ENCODE measurements at regions of chr9 and their contacts with region 1.

Region 1: GRCh38 chr9:99855467-99856181 is 33.9 kb downstream of the NR4A3 start:
- DNase-seq: no peak
- ATAC-seq: no peak
- H3K4me3 Mint-ChIP-seq: no peak overlapping the region
- H3K27ac Mint-ChIP-seq: no peak overlapping the region
- H3K4me1 Mint-ChIP-seq: peaks cover 26% of the 10 kb centered on the region
- H3K27me3 Mint-ChIP-seq: no peaks in the 10 kb centered on the region
- CTCF ChIP-seq: no peak

Region 2: DNA sequence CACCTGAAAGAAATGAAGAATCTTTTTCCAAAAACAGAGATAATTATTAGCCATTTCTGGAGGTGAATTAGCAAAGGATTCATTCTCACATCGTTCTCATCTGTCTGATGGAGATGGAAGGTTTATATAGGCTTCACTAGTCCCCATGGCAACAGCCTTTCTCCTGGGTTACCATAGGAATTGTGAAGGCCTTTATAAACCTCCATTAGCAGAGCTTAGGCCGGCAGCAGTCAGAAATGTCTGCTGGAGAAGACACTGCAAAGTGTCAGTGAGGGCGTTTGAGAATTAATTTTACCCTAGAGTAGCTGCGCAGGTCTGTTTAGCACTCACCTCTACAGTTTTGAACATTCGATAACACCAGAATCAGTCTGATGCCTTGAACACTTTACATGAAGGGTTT is 324.3 kb before region 1 on chr9:
- CTCF ChIA-PET with region 1: no interaction called
- POLR2A ChIA-PET with region 1: no interaction called
- intact Hi-C with region 1: no loop called
- DNase-seq: no peak
- ATAC-seq: no peak
- H3K4me3 Mint-ChIP-seq: no peak overlapping the region
- H3K27ac Mint-ChIP-seq: no peak overlapping the region
- H3K4me1 Mint-ChIP-seq: no peaks in the 10 kb centered on the region
- H3K27me3 Mint-ChIP-seq: peaks cover 15% of the 10 kb centered on the region
- CTCF ChIP-seq: no peak

Region 3: GRCh38 chr9:99868845-99869244 is 13.2 kb after region 1 on chr9:
- CTCF ChIA-PET with region 1: interaction called, 13 read pairs
- POLR2A ChIA-PET with region 1: interaction called, 4 read pairs
- intact Hi-C with region 1: no loop called
- DNase-seq: no peak
- ATAC-seq: peak; percentile 43
- H3K4me3 Mint-ChIP-seq: no peak overlapping the region
- H3K27ac Mint-ChIP-seq: no peak overlapping the region
- H3K4me1 Mint-ChIP-seq: peaks cover 19% of the 10 kb centered on the region
- H3K27me3 Mint-ChIP-seq: no peaks in the 10 kb centered on the region
- CTCF ChIP-seq: no peak